ENCODE measurements at regions of chr16 and their contacts with region 1.

Region 1: DNA sequence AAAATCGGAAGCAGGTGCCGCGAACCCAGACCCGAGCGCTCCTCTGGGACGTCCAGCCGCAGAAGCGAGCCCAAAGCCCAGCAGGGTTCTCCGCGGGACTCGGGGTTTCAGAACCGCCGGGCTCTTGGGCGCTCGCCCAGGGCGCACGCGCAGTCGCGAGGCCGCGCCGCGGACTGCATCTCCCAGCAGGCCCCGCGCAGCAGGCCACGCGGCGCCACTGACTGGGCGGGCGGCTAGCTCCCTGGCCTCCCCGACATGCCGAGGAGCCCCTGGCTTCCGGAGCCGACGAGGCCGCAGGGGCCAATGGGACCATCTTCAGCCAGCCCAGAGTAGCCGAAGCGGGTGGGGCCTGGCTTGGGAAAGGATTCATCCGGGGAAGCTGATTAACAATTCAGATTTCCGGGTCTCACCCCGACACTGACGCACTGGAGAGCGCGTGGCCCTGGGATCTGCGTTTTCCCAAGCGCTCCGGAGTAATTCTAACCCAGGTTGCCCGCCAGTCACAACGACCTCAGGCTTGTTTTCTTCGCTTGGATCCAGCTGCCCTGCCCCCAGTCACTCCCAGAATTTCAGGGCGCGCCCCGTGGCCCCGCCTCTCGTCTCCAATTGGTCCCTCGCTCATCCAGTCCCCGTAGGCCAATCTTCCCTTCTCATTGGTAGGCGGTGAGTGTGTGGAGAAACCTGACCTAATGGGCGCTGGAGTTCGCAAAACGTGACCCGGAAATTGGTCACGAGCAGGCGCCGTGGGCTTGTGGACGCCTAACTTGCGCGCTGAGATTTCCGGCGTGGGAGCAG is at the start of gene ZNF263:
- DNase-seq: peak; percentile 97
- H3K4me3 ChIP-seq: peak within 1 kb of the TSS; percentile 99
- H3K27ac ChIP-seq: peak within 1 kb of the TSS; percentile 86
- H3K4me1 ChIP-seq: peaks cover 29% of the 10 kb centered on the region
- CTCF ChIP-seq: no peak
- total RNA-seq, gene ZNF263: 65.2 and 65.9 TPM in 2 replicates

Region 2: GRCh38 chr16:2838928-2839327 is 444.0 kb before region 1 on chr16:
- CTCF ChIA-PET with region 1: no interaction called
- POLR2A ChIA-PET with region 1: no interaction called
- intact Hi-C with region 1: no loop called
- DNase-seq: peak; percentile 74
- H3K4me3 ChIP-seq: no peak overlapping the region
- H3K27ac ChIP-seq: no peak overlapping the region
- H3K4me1 ChIP-seq: no peaks in the 10 kb centered on the region
- CTCF ChIP-seq: peak; percentile 85

Region 3: DNA sequence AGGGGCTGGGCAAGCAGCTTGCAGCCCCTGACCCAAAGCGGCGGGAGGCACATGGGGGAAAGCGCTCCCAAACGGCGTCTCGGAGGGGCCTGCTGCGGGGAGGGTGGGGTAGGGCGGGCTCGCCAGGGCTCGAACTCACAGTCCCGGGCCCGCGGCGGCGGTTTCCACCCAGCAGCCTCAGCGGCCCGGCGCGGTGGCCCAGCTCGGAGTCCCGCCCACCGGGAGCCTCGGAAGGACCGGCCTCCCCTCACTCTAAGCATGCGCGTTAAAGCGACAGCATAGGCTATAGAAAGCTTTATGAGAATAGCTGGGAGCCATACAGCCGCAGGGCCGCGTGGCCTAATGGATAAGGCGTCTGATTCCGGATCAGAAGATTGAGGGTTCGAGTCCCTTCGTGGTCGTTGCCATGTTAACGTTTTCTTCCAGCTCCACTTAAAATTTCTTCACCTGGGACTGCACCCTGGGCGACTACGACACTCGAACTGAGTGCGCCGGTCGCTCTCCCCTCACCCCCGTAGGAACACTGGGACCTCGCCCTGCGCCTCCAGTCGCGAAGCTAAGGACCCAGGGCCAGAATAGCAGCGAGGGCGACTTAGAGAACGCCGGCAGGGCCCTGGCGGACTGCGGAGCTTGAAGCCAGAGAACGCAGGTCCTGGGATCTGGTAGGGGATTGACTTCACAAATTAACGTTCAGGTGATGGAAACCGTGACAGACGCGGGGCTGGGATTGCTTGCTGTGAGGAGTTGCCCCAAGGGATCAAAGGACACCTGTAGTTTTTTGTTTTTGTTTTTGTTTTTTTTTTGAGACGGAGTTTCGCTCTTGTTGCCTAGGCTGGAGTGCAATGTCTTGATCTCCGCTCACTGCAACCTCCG is 132.3 kb before region 1 on chr16:
- CTCF ChIA-PET with region 1: no interaction called
- POLR2A ChIA-PET with region 1: no interaction called
- intact Hi-C with region 1: loop called (anchors 2 kb)
- DNase-seq: peak; percentile 97
- H3K4me3 ChIP-seq: peak overlapping the region; percentile 79
- H3K27ac ChIP-seq: peak overlapping the region; percentile 66
- H3K4me1 ChIP-seq: peaks cover 17% of the 10 kb centered on the region
- CTCF ChIP-seq: no peak

Region 4: GRCh38 chr16:3234543-3235541 is 48.1 kb before region 1 on chr16 and contains the start of gene ZNF200:
- CTCF ChIA-PET with region 1: no interaction called
- POLR2A ChIA-PET with region 1: no interaction called
- intact Hi-C with region 1: loop called (anchors 1 kb)
- DNase-seq: peak; percentile 96
- H3K4me3 ChIP-seq: peak within 1 kb of the TSS; percentile 92
- H3K27ac ChIP-seq: peak within 1 kb of the TSS; percentile 72
- H3K4me1 ChIP-seq: peaks cover 19% of the 10 kb centered on the region
- CTCF ChIP-seq: no peak
- total RNA-seq, gene ZNF200: 19.8 and 26.2 TPM in 2 replicates

Region 5: DNA sequence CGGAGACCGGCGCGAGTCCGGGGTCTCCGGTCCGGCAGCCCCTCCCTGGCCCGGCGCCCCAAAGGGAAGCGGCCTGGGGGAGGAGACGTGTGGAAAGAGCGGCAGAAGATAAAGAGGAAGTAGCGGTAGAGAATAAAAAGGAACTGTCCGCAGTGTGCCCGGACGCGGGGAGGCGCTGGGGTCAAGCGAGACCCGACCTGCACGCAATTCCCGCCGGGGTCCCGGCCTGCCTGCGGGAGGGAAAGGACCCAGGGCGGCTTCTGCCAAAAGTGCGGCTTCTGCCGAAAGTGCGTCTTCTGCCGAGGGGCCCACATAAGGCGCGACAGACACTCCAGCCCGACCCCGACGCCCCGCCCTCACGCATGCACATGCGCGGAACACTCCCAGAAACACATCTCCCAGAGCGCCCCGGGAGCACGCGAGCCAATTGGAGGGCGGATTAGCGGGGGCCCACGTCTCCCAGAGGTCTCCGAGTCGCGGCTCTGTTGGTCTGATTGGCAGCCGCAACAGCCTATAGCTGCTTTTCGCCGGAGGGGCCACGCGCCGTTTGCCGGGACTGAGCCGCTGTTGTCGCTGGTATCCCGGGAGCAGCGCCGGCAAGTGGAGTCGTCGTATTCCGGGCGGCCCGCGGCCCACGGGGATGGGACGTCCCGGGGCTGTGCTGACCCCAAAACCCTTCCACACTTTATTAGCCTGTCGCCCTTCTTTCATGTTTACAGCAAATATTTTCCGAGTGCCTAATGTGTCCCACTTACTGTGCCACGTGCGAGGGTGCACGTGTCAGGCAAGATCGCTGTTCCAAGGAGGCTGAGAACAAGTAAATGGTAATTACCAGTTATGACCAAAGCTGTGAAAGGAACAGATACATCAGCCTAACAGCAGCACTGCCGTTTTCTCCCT is 18.5 kb before region 1 on chr16:
- CTCF ChIA-PET with region 1: interaction called, 3 read pairs
- POLR2A ChIA-PET with region 1: no interaction called
- intact Hi-C with region 1: loop called (anchors 2 kb)
- DNase-seq: peak; percentile 99
- H3K4me3 ChIP-seq: peak overlapping the region; percentile 87
- H3K27ac ChIP-seq: peak overlapping the region; percentile 83
- H3K4me1 ChIP-seq: peaks cover 24% of the 10 kb centered on the region
- CTCF ChIP-seq: peak; percentile 54

Region 6: DNA sequence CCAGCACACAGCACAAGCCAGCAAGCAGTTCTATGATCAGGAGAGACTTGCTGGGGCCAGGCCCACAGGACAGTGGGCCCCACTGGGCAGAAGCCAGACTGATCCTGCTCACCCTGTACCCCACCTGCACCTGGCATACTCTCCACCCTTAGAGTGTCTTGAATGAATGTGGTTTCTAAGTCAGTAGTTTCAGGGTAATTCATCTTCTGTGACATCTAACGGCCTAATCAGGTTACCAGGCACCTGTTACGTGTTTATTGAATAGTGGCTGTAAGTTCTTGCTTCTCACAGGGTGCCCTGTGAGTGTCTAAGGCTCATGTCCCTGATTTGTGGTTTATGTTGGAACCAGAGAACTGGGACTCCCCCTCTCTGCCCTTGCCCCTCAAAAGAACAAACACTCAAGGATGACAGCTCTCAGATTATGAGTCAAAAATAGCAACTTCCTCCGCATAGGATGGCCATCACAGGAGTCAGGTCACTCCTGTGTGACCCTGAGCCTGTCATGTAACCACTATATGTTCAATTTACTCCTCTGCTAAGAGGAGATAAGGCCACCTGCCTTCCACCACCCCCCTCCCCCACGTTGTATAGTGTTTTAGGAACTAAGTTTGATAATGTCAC is 65.7 kb after region 1 on chr16:
- CTCF ChIA-PET with region 1: no interaction called
- POLR2A ChIA-PET with region 1: interaction called, 3 read pairs
- intact Hi-C with region 1: loop called (anchors 1 kb)
- DNase-seq: peak; percentile 92
- H3K4me3 ChIP-seq: peak overlapping the region; percentile 33
- H3K27ac ChIP-seq: peak overlapping the region; percentile 98
- H3K4me1 ChIP-seq: peaks cover 53% of the 10 kb centered on the region
- CTCF ChIP-seq: no peak

Region 7: GRCh38 chr16:3400779-3401688 is 118.1 kb after region 1 on chr16 and contains the starts of genes ZNF174 and ZSCAN32:
- CTCF ChIA-PET with region 1: no interaction called
- POLR2A ChIA-PET with region 1: interaction called, 5 read pairs
- intact Hi-C with region 1: loop called (anchors 1 kb)
- DNase-seq: peak; percentile 100
- H3K4me3 ChIP-seq: peak within 1 kb of the TSS; percentile 76
- H3K27ac ChIP-seq: peak within 1 kb of the TSS; percentile 58
- H3K4me1 ChIP-seq: peaks cover 36% of the 10 kb centered on the region
- CTCF ChIP-seq: peak; percentile 31; the same call in 1 of the 2 replicates
- total RNA-seq, gene ZNF174: 21.1 and 23.3 TPM in 2 replicates
- total RNA-seq, gene ZSCAN32: 19.4 and 22.5 TPM in 2 replicates

Region 8: DNA sequence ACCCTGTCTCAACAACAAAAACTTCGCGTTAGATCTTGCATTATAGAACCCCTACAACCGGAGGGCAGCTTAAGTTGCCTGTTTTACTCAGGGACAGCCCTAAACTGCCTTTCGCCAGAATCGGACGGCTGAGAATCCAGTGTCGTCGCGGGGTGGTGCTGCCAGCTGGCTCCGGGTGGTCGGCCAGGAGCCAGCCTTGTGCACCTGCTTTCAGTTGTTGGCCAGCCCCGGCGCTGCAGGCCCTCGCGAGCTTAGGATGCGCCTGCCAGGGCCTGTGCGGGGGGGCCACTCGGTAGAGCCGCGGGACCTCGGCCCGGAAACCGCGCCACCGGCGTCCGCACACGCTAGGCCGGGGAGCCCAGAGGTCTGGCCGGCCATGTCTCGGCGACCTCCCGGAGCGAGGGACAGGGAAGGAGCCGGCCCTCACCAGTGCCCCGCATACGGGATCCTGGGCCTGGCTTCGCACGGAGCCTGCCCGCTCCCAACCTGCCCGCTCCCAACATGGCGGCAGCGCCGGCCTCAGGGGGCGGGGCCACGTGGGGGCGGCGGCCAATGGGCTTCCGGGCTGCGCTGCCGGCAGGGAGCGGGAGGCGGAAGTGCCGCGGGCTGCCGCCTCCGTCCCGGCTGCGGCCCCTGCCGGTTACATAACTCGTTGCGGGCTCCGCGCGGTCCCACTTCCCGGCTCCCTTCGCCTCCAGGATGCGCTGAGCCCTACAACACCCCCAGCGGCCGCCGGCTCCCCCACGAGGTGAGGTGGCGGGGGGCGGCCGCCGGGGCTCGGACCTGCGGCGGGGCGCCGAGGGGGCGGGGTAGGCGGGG is 174.7 kb after region 1 on chr16:
- CTCF ChIA-PET with region 1: no interaction called
- POLR2A ChIA-PET with region 1: no interaction called
- intact Hi-C with region 1: loop called (anchors 5 kb)
- DNase-seq: peak; percentile 94
- H3K4me3 ChIP-seq: peak overlapping the region; percentile 98
- H3K27ac ChIP-seq: peak overlapping the region; percentile 53
- H3K4me1 ChIP-seq: peaks cover 43% of the 10 kb centered on the region
- CTCF ChIP-seq: peak; percentile 60

Measured in OCI-LY7 (cell line).